Right ventricle myocardium inferior (tissue), 1 donor: ENCODE measurements at regions of chr21 and their contacts with region 1.

Region 1: GRCh38 chr21:27700974-27701614 is 734.2 kb upstream of the ADAMTS5 start:
- DNase-seq: peak; percentile 82
- ATAC-seq: peak; percentile 93

Region 2: DNA sequence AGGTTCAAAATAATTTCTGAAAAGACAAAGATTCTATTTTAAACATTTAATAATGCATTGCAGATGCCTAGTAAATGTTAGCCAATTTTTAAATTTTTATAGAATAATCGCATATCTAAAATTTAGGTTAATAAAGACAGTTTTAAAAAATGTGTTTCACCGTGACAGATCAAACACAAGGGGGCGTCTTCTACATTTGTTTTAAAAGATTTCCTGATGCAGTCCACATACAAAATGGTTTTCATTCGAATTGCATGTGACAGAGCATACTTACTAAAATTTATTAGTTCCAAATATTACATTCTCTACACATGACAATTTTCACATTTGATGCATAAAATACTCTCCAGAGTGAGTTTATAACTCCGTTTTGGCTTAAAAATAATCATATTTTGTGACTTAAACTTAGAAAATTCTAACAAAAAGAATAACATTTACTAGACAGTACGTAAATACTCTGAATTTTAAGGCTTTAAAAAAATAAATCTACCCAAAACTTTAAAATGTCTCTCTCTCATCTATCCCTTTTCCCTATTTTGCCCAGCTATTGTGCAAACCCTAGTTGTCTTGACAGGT is 931.4 kb before region 1 on chr21:
- intact Hi-C with region 1: loop called (anchors 10 kb)
- DNase-seq: no peak
- ATAC-seq: no peak

Region 3: DNA sequence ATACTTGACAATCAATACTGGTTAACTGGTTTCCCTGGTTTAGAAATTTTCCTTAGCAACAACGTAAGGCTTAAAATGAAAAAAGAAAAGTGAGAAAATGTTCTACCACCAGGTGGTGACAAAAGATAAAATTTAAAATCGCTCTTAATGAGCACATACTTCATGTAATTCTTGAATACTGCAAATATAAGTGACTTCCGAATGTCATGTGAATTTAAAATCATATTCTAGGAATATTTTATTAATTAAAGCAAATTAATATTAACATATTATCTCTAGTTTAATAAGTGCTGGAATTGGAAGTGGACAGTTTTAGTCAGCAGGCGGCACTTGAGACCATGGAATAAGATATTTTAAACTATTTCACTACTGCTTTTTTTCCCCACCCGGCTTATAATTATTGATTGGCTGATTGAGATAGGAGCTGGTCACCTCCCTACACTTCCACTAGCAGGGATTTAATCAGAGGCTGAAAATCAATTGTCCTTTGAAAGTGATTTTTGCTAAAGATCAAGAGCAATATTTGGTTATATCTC is 850.9 kb before region 1 on chr21:
- intact Hi-C with region 1: loop called (anchors 1 kb)
- DNase-seq: no peak
- ATAC-seq: no peak

Region 4: GRCh38 chr21:27362249-27362648 is 338.8 kb before region 1 on chr21:
- intact Hi-C with region 1: loop called (anchors 10 kb)
- DNase-seq: no peak
- ATAC-seq: no peak

Region 5: DNA sequence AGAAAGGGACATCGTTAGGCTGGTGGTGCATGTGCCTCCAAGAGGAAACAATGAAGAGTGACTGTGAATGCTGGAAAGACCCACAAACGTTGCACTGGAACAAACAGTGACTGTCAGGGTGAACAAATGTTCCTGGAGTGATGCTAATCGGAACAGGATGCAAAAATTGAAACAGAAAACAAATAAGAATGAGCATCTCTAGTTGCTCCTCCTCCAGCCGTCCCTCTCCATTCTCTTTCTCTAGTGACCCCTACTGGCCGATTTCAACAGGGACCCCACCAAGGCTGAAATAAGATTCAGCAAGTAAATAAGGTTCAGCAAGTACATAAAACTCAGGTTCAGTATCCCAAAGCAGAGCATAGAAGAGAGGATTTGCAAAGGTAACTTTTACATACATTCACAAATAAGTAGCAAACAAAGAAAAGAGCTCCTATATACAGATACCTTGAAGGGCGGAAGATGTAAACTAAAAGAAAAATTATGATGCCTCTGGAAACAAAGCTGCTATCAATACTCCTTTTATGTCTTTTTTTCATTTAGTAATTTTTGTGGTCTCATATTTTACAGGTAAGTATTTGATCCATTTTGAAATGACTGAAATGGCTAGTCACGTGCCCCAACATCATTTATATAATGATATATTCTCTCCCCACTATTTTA is 101.9 kb after region 1 on chr21:
- intact Hi-C with region 1: loop called (anchors 5 kb)
- DNase-seq: no peak
- ATAC-seq: no peak

Region 6: DNA sequence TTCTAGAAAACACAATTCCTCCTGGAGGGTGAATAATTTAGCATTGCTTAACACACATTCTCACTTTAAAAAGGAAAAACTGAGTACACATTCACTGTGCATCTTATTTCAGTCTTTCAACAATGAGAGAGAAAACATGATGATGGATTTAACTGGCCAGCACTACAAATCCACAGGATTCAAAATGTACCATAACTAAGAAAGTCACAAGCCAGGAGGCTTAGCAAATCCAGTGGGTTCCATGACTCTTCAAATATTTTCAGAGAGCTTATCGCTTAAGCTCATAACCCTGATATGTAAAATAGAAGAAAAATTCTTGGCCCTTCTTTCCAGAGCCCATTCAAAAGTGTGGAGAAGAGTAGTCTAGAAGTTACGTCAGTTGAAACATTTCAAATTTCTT is 471.3 kb after region 1 on chr21:
- intact Hi-C with region 1: no loop called
- DNase-seq: no peak
- ATAC-seq: no peak